Activated naive CD8-positive, alpha-beta T cell treated with anti-CD3 and anti-CD28 coated beads, Interleukin-2, amount 10 ng/mL, durations not matched to agents 7 days and 5 days (primary cell): ENCODE measurements at regions of chr19 and their contacts with region 1.

Region 1: GRCh38 chr19:45103156-45103507 is 10.2 kb downstream of the PPP1R37 start:
- DNase-seq: peak; percentile 66
- ATAC-seq: peak; percentile 92
- H3K4me3 Mint-ChIP-seq: peak overlapping the region; percentile 70
- H3K27ac Mint-ChIP-seq: peak overlapping the region; percentile 77
- H3K4me1 Mint-ChIP-seq: peaks cover 38% of the 10 kb centered on the region
- H3K27me3 Mint-ChIP-seq: no peaks in the 10 kb centered on the region

Region 2: DNA sequence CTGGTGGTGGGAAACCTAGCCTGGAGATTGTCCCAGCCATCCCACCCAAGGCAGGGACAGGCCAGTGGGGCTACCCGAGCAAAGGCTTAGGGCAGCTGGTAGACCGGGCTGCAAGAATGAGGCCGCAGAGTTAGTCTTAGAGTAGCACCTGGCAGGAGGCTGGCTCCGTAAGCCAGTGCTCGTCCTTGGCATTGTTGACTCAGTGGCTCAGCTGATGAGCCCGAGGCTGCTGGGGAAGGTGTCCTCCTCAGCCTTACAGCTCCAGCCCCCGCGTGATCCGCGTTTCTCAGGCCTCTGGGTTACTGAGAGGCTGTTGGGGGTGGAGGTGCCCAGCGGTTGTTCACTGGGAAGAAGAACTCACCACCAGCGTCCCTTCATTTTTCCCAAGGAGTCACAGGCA is 14.5 kb after region 1 on chr19:
- POLR2A ChIA-PET with region 1: interaction called, 21 read pairs
- DNase-seq: peak; percentile 45
- ATAC-seq: peak; percentile 11
- H3K4me3 Mint-ChIP-seq: peak overlapping the region; percentile 69
- H3K27ac Mint-ChIP-seq: peak overlapping the region; percentile 84
- H3K4me1 Mint-ChIP-seq: peaks cover 66% of the 10 kb centered on the region
- H3K27me3 Mint-ChIP-seq: no peaks in the 10 kb centered on the region

Region 3: GRCh38 chr19:45187421-45188100 is 84.4 kb after region 1 on chr19:
- POLR2A ChIA-PET with region 1: no interaction called
- DNase-seq: peak; percentile 48
- ATAC-seq: peak; percentile 87
- H3K4me3 Mint-ChIP-seq: no peak overlapping the region
- H3K27ac Mint-ChIP-seq: no peak overlapping the region
- H3K4me1 Mint-ChIP-seq: peaks cover 4% of the 10 kb centered on the region
- H3K27me3 Mint-ChIP-seq: no peaks in the 10 kb centered on the region